A549 (cell line): ENCODE measurements at regions of chr11 and their contacts with region 1.

Region 1: GRCh38 chr11:44286268-44286880 is 23.6 kb downstream of the ALX4 start:
- DNase-seq: peak; percentile 70 to 89
- ATAC-seq: peak; percentile 78 to 88; a peak in 4 of 6 replicates
- H3K4me3 ChIP-seq: no peak overlapping the region
- H3K27ac ChIP-seq: peak overlapping the region; percentile 57 to 78; a peak in 5 of 6 replicates
- H3K4me1 ChIP-seq: peaks cover 47% of the 10 kb centered on the region
- CTCF ChIP-seq: peak; percentile 91
- EP300 ChIP-seq: no peak
- POLR2A ChIP-seq: no peak
- RAD21 ChIP-seq: peak; percentile 95 to 96

Region 2: DNA sequence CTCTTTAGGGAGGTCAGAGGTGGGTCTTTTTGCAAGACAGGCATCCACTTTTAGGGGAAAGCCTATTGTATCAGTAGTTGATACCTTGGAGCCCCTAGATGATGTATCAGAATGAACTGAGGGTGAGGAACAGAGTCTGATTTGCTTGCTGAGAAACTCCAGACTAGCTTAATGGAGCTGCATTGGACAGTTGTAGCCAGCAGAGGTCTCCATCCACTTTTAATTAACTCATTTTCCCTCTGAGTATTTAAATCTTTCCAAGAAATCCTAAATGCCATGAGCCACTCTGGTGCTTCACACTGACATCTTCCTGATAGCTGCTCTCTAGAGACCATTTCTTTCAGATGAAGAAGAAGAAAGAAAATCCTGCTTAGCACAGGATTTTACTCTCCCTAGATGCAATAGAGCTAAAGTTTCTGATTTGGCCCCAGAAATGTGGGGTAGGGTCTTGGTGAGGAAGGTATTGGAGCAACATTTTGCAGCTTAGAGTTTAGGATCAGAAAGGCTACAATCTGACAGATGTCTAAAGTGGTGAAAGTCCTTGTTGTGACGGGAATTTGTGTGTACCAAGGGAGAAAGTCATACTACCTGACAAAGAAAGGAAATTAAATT is 152.9 kb before region 1 on chr11:
- CTCF ChIA-PET with region 1: interaction called, 14 read pairs
- POLR2A ChIA-PET with region 1: no interaction called
- DNase-seq: peak; percentile 23 to 47
- ATAC-seq: peak; percentile 72 to 79; a peak in 5 of 6 replicates
- H3K4me3 ChIP-seq: no peak overlapping the region
- H3K27ac ChIP-seq: no peak overlapping the region
- H3K4me1 ChIP-seq: 0 out of 3 replicates have a peak, but pooled peaks cover 4% of the 10 kb centered on the region
- CTCF ChIP-seq: peak; percentile 80
- EP300 ChIP-seq: no peak
- POLR2A ChIP-seq: no peak
- RAD21 ChIP-seq: peak; percentile 72 to 75

Region 3: GRCh38 chr11:44301856-44302231 is 15.5 kb after region 1 on chr11:
- CTCF ChIA-PET with region 1: interaction called, 26 read pairs
- POLR2A ChIA-PET with region 1: interaction called, 5 read pairs
- DNase-seq: peak; percentile 74 to 87
- ATAC-seq: peak; percentile 78 to 84
- H3K4me3 ChIP-seq: no peak overlapping the region
- H3K27ac ChIP-seq: peak overlapping the region; percentile 83 to 93
- H3K4me1 ChIP-seq: peaks cover 40% of the 10 kb centered on the region
- CTCF ChIP-seq: no peak
- EP300 ChIP-seq: peak; percentile 83 to 90; a peak in 4 of 5 replicates
- POLR2A ChIP-seq: no peak
- RAD21 ChIP-seq: no peak; a peak in 1 of 5 replicates

Region 4: DNA sequence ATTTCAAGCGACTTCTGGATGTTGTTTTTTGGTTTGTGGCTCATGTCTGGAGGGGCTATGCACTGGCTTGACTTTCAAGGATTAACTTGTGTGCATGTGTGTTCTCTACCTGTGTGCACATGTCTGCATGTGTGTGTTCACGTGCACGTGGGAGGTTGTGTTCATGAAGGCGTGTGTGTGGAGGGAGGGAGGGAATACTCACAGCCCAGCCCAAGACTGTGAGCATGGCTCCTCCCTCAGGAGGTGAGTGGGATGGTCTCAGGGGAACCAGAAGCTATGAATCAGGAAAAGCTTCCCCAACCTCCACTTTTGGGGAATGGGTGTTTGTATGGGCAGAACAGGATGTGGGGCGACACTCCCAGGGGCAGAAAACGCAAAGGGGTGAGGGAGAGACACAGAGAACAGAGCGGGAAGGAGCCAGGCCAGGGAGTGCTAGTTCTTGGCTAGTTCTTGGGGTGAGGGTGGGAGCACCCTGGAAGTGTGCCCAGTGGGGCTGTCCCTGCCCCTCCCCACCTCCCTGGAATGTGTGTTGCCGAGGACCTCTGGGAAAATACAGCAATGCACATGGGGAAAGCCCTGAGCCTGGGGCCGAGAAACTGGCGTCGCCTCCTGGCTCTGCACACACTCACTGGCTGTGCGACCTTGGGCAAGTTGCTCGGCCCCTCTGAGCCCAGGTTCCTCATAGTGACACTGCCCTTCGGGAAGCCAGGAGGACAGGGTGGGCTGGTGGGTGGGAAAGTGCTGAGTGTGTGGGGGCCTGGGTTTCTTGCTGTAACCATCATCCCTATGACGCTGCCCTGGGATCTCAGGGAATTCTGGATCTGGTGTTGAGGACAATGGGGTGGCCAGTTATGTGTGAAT is 40.5 kb after region 1 on chr11:
- CTCF ChIA-PET with region 1: interaction called, 46 read pairs
- POLR2A ChIA-PET with region 1: no interaction called
- DNase-seq: no peak
- ATAC-seq: peak; percentile 42 to 72; a peak in 4 of 6 replicates
- H3K4me3 ChIP-seq: no peak overlapping the region
- H3K27ac ChIP-seq: no peak overlapping the region
- H3K4me1 ChIP-seq: peaks cover 20% of the 10 kb centered on the region
- CTCF ChIP-seq: peak; percentile 20; the same call in 1 of the 3 replicates
- EP300 ChIP-seq: no peak
- POLR2A ChIP-seq: no peak
- RAD21 ChIP-seq: peak; percentile 37 to 49; a peak in 3 of 5 replicates

Region 5: DNA sequence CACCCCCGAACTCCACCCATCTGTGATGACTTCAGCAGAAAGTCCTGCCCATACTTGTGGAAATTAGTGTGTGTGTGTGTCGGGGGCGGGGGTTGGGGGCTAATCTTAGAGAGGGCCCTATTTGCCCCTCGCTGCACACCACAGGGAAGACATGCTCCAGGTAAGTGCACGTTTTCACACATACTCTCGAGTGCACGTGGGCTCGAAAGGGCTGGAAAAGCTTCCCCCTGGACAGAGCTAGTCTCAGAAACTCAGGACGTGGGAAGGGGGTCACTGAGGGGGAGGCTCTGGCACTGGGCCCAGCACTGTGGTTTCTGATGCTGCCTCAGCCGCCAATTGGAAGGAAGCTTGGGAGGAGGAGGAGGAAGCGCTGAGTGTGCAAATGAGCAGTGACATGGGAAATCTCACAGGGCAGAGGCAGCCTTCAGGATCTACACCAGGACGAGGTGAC is 238.4 kb after region 1 on chr11:
- CTCF ChIA-PET with region 1: interaction called, 29 read pairs
- POLR2A ChIA-PET with region 1: no interaction called
- DNase-seq: no peak
- ATAC-seq: no peak
- H3K4me3 ChIP-seq: no peak overlapping the region
- H3K27ac ChIP-seq: no peak overlapping the region
- H3K4me1 ChIP-seq: peaks cover 8% of the 10 kb centered on the region; the same call in 1 of the 3 replicates
- CTCF ChIP-seq: no peak
- EP300 ChIP-seq: no peak
- POLR2A ChIP-seq: no peak
- RAD21 ChIP-seq: no peak

Region 6: DNA sequence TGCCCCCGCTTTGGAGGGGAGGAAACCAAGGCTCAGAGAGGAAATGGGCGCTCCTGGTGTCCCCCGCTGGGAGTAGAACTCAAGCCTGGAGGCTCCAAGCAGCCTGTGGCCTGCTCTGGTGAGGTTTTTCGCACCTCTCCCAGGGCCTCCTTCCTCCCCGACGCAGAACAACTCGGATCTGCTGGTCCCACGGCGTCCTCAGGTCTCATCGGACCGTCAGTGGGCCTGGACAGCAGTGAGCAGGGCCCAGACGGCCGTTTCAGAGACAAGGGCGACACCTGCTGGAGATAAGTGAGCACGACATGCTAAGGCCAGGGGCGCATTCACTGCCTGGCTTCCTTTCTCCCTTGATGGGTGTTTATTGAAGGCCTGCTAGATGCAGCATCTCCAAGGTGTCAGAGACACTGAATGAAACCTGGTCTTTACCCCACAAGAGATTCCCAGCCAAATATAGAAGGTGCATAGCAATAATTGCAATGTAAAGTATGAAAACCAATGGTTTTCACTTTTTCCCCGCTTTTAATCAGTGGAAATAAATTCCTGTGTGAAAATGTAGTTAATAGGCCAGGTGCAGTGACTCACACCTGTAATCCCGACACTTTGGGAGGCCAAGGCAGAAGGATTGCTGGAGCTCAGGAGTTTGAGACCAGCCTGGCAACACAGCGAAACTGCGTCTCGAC is 252.1 kb after region 1 on chr11:
- CTCF ChIA-PET with region 1: interaction called, 152 read pairs
- POLR2A ChIA-PET with region 1: no interaction called
- DNase-seq: peak; percentile 69 to 91
- ATAC-seq: peak; percentile 88 to 99
- H3K4me3 ChIP-seq: no peak overlapping the region
- H3K27ac ChIP-seq: peak overlapping the region in 1 of 2 experiments; percentile 69; a peak in 3 of 6 replicates
- H3K4me1 ChIP-seq: no peaks in the 10 kb centered on the region
- CTCF ChIP-seq: peak; percentile 88
- EP300 ChIP-seq: no peak
- POLR2A ChIP-seq: no peak
- RAD21 ChIP-seq: peak; percentile 97